Psoas muscle (tissue), 8 donors: ENCODE measurements at regions of chr4 and their contacts with region 1.

Region 1: DNA sequence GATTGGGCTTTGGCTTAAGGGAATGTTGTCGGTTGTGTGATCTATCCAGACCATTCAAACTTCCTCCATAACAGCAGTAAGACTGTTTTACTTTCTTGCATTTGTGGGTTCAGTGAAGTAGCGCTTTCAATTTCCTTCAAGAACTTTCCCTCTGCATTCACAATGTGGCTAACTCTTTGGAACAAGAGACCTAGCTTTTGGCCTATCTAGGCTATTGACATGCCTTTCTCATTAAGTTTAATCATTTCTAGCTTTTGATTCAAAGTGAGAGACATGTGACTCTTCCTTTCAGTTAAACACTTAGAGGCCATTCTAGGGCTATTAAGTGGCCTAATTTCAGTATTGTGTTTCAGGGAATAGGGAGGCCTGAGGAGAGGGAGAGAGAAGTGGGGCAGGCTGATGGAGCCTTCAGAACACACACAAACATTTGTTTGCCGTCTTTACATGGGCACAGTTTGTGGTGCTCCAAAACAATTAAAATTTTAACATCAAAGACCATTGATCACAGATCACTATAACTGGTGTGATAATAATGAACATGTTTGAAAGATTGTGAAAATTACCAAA is 34.1 kb downstream of the ADH5 start:
- DNase-seq: no peak
- ATAC-seq: no peak
- H3K4me3 ChIP-seq: no peak overlapping the region
- H3K27ac ChIP-seq: no peak overlapping the region
- H3K4me1 ChIP-seq: peaks cover under 1% of the 10 kb centered on the region
- H3K27me3 ChIP-seq: no peaks in the 10 kb centered on the region
- CTCF ChIP-seq: no peak

Region 2: DNA sequence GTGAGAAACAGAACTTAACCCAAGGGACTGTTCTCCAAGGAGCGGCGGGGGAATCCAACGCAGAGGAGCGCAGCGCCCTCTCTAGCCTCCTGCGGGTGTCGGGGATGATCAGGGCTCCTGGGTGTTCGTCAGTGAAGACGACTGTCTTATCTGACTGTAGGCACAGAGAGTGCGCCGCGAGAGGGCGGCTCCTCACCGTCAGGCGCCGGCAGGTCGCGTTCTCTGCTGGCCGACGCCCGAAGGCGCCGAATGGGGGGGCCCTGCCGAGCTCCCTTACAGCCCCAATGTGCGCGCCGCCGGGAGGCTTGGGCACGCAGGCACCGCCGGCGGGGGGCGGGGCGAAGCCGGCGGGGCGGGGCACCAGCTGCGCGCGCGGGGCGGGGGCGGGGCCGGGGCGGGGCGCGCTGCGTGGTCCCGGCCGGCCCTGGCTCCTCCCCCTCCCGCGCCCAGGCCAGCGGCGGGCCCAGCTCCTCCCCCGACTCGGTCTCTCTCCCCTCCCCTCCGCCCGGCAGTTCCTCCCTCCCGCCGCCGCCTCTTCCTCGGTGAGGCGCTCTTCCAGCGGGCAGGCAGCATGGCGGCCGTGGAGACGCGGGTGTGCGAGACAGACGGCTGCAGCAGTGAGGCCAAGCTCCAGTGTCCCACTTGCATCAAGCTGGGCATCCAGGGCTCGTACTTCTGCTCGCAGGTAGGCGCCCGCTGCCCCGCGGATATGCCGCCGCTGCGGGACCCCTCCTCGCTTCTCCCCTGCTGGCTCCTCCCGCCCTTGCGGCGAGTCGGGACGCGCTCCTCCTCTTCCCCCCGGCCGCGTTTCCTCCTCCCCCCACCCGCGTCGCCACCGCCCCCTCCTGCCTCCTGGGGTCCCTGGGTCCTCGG is 59.1 kb before region 1 on chr4 and contains the start of gene METAP1:
- intact Hi-C with region 1: loop called (anchors 2 kb)
- DNase-seq: peak; percentile 96 to 98
- ATAC-seq: peak; percentile 92 to 94 (median 92)
- H3K4me3 ChIP-seq: peak within 1 kb of the TSS; percentile 98
- H3K27ac ChIP-seq: peak within 1 kb of the TSS; percentile 94
- H3K4me1 ChIP-seq: peaks cover 13% of the 10 kb centered on the region
- H3K27me3 ChIP-seq: no peaks in the 10 kb centered on the region
- CTCF ChIP-seq: peak; percentile 49
- total RNA-seq, gene METAP1: 18.2 to 36.9 (median 30.0) TPM

Region 3: GRCh38 chr4:99013402-99013843 is 41.1 kb before region 1 on chr4:
- intact Hi-C with region 1: loop called in 1 of 2 experiments (anchors 5 kb)
- DNase-seq: no peak
- ATAC-seq: no peak
- H3K4me3 ChIP-seq: no peak overlapping the region
- H3K27ac ChIP-seq: no peak overlapping the region
- H3K4me1 ChIP-seq: no peaks in the 10 kb centered on the region
- H3K27me3 ChIP-seq: no peaks in the 10 kb centered on the region
- CTCF ChIP-seq: no peak

Region 4: DNA sequence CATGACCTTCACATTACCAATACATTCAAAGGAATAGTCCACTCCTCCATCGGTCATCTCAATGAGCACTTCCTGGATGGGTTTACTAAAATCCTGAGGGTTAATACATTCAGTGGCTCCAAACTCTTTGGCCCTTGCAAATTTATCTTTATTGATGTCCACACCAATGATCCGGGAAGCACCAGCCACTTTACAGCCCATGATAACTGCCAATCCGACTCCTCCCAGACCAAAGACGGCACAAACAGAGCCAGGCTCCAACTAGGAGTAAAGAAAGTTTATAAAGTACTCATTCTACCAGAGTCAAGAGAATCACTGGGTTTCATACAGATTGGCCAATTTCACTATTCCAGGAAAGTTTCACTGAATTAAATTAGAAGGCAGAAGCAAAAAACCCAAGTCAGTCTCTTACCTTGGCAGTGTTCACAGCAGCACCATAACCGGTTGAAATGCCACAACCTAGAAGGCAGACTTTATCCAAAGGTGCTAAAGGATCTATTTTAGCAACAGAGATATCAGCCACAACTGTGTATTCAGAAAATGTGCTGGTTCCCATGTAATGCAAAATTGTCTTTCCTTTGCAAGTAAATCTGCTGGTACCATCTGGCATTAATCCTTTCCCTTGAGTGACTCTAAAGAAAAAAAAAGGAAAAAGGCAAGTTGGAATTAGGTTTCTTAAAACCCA is 21.9 kb after region 1 on chr4:
- intact Hi-C with region 1: loop called in 1 of 2 experiments (anchors 2 kb)
- DNase-seq: no peak
- ATAC-seq: no peak
- H3K4me3 ChIP-seq: no peak overlapping the region
- H3K27ac ChIP-seq: no peak overlapping the region
- H3K4me1 ChIP-seq: no peaks in the 10 kb centered on the region
- H3K27me3 ChIP-seq: no peaks in the 10 kb centered on the region
- CTCF ChIP-seq: no peak

Region 5: GRCh38 chr4:99180382-99181070 is 126.0 kb after region 1 on chr4:
- intact Hi-C with region 1: no loop called
- DNase-seq: no peak
- ATAC-seq: peak in 3 of 4 donors; percentile 39 to 74 (median 53)
- H3K4me3 ChIP-seq: no peak overlapping the region
- H3K27ac ChIP-seq: no peak overlapping the region
- H3K4me1 ChIP-seq: no peaks in the 10 kb centered on the region
- H3K27me3 ChIP-seq: no peaks in the 10 kb centered on the region
- CTCF ChIP-seq: no peak